A549 (cell line): ENCODE measurements at regions of chr2 and their contacts with region 1.

Region 1: GRCh38 chr2:189580658-189581353 is at the start of gene SLC40A1:
- DNase-seq: peak; percentile 51 to 80
- ATAC-seq: peak; percentile 96 to 97
- H3K4me3 ChIP-seq: peak within 1 kb of the TSS; percentile 63
- H3K27ac ChIP-seq: peak within 1 kb of the TSS; percentile 77 to 96
- H3K4me1 ChIP-seq: peaks cover 41% of the 10 kb centered on the region
- CTCF ChIP-seq: no peak
- EP300 ChIP-seq: no peak
- POLR2A ChIP-seq: peak; percentile 87
- RAD21 ChIP-seq: peak in 1 of 2 experiments; percentile 15; a peak in 2 of 5 replicates
- polyA plus RNA-seq, gene SLC40A1: 12.3 and 25.0 TPM in 2 replicates

Region 2: GRCh38 chr2:189440947-189441708 is 139.7 kb before region 1 on chr2 and contains the start of gene WDR75:
- CTCF ChIA-PET with region 1: no interaction called
- POLR2A ChIA-PET with region 1: interaction called, 12 read pairs
- DNase-seq: peak; percentile 74 to 95
- ATAC-seq: peak; percentile 97 to 99
- H3K4me3 ChIP-seq: peak within 1 kb of the TSS; percentile 70
- H3K27ac ChIP-seq: peak within 1 kb of the TSS; percentile 83 to 97
- H3K4me1 ChIP-seq: peaks cover 26% of the 10 kb centered on the region
- CTCF ChIP-seq: no peak
- EP300 ChIP-seq: no peak
- POLR2A ChIP-seq: peak; percentile 96
- RAD21 ChIP-seq: no peak
- polyA plus RNA-seq, gene WDR75: 122 and 152 TPM in 2 replicates

Region 3: DNA sequence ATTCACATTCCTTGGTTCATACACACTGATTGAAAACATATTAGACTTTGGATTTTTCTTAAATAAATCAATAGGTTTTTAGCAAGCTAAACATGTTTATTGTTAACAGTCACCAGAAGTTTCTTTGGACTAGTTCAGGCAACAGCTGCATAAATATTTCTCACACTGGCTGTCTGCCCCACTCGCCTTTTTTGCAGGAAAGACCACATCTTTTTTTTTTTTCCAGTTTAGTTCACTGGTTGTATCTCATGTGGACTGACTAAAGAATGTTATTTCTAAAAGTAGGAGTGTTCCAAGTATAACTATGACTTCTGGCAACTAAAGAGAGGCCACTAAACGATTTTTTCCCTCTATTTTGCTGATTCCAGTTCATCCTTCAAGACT is 31.4 kb before region 1 on chr2:
- CTCF ChIA-PET with region 1: no interaction called
- POLR2A ChIA-PET with region 1: interaction called, 18 read pairs
- DNase-seq: no peak
- ATAC-seq: no peak
- H3K4me3 ChIP-seq: no peak overlapping the region
- H3K27ac ChIP-seq: peak overlapping the region; percentile 71 to 85
- H3K4me1 ChIP-seq: peaks cover 44% of the 10 kb centered on the region
- CTCF ChIP-seq: no peak
- EP300 ChIP-seq: no peak
- POLR2A ChIP-seq: no peak
- RAD21 ChIP-seq: no peak

Region 4: GRCh38 chr2:189555246-189555645 is 25.6 kb before region 1 on chr2:
- CTCF ChIA-PET with region 1: interaction called, 5 read pairs
- POLR2A ChIA-PET with region 1: interaction called, 18 read pairs
- DNase-seq: peak in 1 of 2 experiments; percentile 79
- ATAC-seq: peak; percentile 74 to 79
- H3K4me3 ChIP-seq: no peak overlapping the region
- H3K27ac ChIP-seq: peak overlapping the region; percentile 74 to 88
- H3K4me1 ChIP-seq: peaks cover 83% of the 10 kb centered on the region
- CTCF ChIP-seq: no peak
- EP300 ChIP-seq: peak in 1 of 2 experiments; percentile 55; a peak in 1 of 5 replicates
- POLR2A ChIP-seq: no peak
- RAD21 ChIP-seq: peak in 1 of 2 experiments; percentile 37; a peak in 1 of 5 replicates

Region 5: DNA sequence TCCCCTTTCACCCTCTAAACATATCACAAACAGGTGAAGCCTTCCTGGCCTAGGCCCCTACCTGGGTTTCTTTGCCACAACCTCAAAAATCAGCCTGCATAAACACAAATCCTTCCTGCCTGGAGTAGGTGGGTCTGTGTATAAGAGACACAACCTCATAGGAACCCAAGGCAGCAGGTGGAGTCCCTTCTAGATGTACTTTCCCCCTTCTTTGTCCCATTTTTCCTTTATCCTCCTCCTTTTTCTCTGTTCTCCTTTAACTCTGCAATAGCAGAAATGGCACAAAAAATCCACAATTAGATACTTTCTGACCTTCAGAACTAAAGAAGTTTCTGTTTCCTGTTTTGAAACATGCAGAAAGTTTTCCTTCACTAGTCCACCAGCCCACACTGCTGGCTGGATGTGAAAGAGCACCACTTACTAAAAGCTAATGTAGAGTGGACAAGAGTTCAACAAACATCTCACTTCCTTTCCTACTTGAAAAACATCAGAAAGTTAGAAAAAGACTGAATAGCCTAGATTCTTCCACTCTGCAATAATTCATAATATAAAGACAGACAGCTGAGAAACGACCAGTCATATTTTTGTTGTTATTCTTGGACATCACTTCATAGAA is 11.4 kb before region 1 on chr2:
- CTCF ChIA-PET with region 1: interaction called, 3 read pairs
- POLR2A ChIA-PET with region 1: interaction called, 10 read pairs
- DNase-seq: no peak
- ATAC-seq: no peak
- H3K4me3 ChIP-seq: no peak overlapping the region
- H3K27ac ChIP-seq: no peak overlapping the region
- H3K4me1 ChIP-seq: peaks cover 18% of the 10 kb centered on the region
- CTCF ChIP-seq: no peak
- EP300 ChIP-seq: no peak
- POLR2A ChIP-seq: no peak
- RAD21 ChIP-seq: no peak

Region 6: DNA sequence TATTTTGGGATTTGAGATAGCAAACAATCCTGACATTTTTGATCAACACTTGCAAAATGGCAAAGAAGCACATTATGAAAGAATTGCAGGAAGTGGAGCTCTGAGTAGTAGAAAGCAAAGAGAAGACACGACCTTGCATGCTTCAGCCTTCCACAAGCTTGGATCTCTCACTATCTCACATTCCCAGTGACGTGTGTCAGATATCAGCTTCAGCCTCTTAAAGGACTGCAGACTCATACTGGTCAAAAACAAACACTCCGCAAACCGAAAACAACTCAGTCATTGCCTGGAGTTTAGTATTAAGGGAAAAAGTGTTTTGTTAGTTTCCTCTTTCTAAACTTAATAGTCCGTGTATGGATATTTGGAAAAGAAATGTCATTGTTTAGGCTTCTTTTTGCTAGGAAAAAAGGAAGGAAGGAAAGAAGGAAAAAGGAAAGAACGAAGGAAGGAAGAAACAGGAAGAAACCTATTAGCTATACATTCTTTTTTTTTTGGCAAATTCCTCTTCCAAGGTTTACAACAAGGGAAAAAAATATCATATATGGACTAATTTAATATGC is 32.4 kb after region 1 on chr2:
- CTCF ChIA-PET with region 1: interaction called, 3 read pairs
- POLR2A ChIA-PET with region 1: interaction called, 48 read pairs
- DNase-seq: peak; percentile 25 to 91
- ATAC-seq: peak; percentile 97
- H3K4me3 ChIP-seq: peak overlapping the region; percentile 37; the same call in 2 of the 3 replicates
- H3K27ac ChIP-seq: peak overlapping the region; percentile 72 to 82
- H3K4me1 ChIP-seq: peaks cover 50% of the 10 kb centered on the region
- CTCF ChIP-seq: no peak
- EP300 ChIP-seq: peak in 1 of 2 experiments; percentile 32; a peak in 1 of 5 replicates
- POLR2A ChIP-seq: no peak
- RAD21 ChIP-seq: no peak

Region 7: GRCh38 chr2:189628817-189629530 is 48.2 kb after region 1 on chr2:
- CTCF ChIA-PET with region 1: no interaction called
- POLR2A ChIA-PET with region 1: interaction called, 15 read pairs
- DNase-seq: peak in 1 of 2 experiments; percentile 51
- ATAC-seq: peak; percentile 52 to 76; a peak in 4 of 6 replicates
- H3K4me3 ChIP-seq: no peak overlapping the region
- H3K27ac ChIP-seq: 0 out of 6 replicates have a peak overlapping the region, but pooled peaks of 1 of the 2 experiments have one; percentile 5
- H3K4me1 ChIP-seq: peaks cover 16% of the 10 kb centered on the region; the same call in 2 of the 3 replicates
- CTCF ChIP-seq: 0 out of 3 replicates have a peak, but pooled peaks have one; percentile 11
- EP300 ChIP-seq: no peak
- POLR2A ChIP-seq: no peak
- RAD21 ChIP-seq: peak; percentile 35 to 55; a peak in 2 of 5 replicates

Region 8: DNA sequence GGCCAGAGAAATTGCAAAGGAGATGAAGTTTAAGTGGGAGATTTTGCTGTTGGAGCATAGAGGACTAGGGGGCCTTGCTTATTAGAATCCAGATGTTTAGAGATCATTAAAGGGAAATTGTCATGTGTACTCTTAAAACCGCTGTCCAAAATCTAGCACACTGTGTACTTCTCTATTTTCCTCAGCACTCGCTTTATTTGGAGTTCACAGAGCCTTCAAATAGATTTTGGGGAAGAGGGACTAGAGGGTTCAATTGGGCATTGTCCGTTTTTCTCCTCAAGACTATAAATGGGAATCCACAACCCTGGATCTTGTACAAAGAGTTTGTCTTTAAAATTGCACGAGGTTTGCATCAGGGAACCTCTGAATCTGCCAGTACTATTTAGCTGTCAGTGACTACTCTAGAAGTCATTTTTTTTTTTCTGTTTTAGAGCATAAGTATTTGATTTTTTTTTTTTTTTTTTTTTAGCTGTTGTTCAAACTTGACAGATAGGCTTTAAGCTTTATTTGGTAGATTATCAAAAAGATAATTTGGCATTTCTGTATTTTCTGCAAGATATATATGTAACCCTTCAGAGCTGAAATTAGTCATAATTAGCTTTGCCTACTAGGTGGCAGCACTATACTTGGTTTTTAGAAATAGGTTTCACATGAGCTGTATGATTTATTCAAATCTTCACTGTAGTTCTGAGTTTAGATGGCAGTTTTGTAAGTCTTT is 217.7 kb after region 1 on chr2:
- CTCF ChIA-PET with region 1: no interaction called
- POLR2A ChIA-PET with region 1: no interaction called
- DNase-seq: peak in 1 of 2 experiments; percentile 47
- ATAC-seq: peak; percentile 66 to 88; a peak in 4 of 6 replicates
- H3K4me3 ChIP-seq: no peak overlapping the region
- H3K27ac ChIP-seq: peak overlapping the region in 1 of 2 experiments; percentile 32; a peak in 1 of 6 replicates
- H3K4me1 ChIP-seq: peaks cover 33% of the 10 kb centered on the region
- CTCF ChIP-seq: peak; percentile 74
- EP300 ChIP-seq: no peak
- POLR2A ChIP-seq: no peak
- RAD21 ChIP-seq: peak; percentile 76 to 82